SK-N-SH (cell line): ENCODE measurements at regions of chr3 and their contacts with region 1.

Region 1: GRCh38 chr3:122679085-122679881 is 1.4 kb upstream of the PARP14 start:
- DNase-seq: peak; percentile 74
- H3K4me3 ChIP-seq: peak overlapping the region in 1 of 2 experiments; percentile 34; a peak in 1 of 4 replicates
- H3K27ac ChIP-seq: no peak overlapping the region
- H3K4me1 ChIP-seq: peaks cover 12 to 16% of the 10 kb centered on the region in 2 experiments; a peak in 3 of 4 replicates
- H3K27me3 ChIP-seq: no peaks in the 10 kb centered on the region
- CTCF ChIP-seq: peak; percentile 86
- EP300 ChIP-seq: no peak
- RAD21 ChIP-seq: peak; percentile 93

Region 2: GRCh38 chr3:121942116-121942788 is 737.0 kb before region 1 on chr3:
- CTCF ChIA-PET with region 1: no interaction called
- POLR2A ChIA-PET with region 1: no interaction called
- DNase-seq: no peak
- H3K4me3 ChIP-seq: no peak overlapping the region
- H3K27ac ChIP-seq: no peak overlapping the region
- H3K4me1 ChIP-seq: no peaks in the 10 kb centered on the region
- H3K27me3 ChIP-seq: no peaks in the 10 kb centered on the region
- CTCF ChIP-seq: no peak
- EP300 ChIP-seq: no peak
- RAD21 ChIP-seq: no peak

Region 3: GRCh38 chr3:122392868-122393844 is 286.1 kb before region 1 on chr3:
- CTCF ChIA-PET with region 1: interaction called, 45 read pairs
- POLR2A ChIA-PET with region 1: interaction called, 5 read pairs
- DNase-seq: peak; percentile 33
- H3K4me3 ChIP-seq: no peak overlapping the region
- H3K27ac ChIP-seq: no peak overlapping the region; a peak in 1 of 4 replicates
- H3K4me1 ChIP-seq: peaks cover 2 to 19% of the 10 kb centered on the region in 2 experiments; a peak in 3 of 4 replicates
- H3K27me3 ChIP-seq: no peaks in the 10 kb centered on the region
- CTCF ChIP-seq: peak; percentile 85
- EP300 ChIP-seq: no peak
- RAD21 ChIP-seq: peak; percentile 83

Region 4: DNA sequence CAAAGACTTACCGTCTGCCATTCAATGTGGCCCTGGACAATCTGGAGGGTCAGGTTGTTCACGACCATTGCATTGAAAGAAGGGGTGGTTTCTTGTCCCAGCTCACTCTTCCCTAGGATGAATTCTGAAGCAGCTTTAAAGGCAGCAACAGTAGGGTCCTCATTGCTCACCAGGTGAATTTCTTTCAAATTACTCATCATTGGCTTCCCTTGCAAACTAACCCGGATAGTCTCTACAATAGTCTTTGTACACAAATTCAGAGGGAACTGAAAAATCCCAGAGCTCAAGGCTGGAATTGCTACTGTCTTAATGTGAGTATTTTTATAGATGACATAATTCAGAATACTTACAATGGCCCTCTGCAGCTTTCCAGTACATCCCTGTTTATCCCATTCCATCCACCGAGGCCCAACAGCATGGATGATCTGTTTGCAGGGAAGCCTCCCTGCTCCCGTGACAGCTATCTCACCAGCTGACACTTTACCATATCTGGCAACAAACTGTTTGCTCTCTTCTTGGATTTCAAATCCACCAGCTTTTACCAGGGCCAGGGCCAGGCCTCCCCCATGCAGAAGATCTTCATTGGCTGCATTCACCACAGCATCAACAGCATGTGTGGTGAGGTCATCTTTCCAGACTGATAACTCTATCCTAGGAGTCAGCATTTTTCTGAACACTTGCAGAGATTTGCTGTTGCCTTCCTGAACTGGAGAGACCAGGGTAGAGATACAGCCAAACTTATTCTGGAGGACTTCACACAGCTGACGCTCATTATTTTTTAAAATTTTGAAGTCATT is 123.8 kb before region 1 on chr3:
- CTCF ChIA-PET with region 1: interaction called, 84 read pairs
- POLR2A ChIA-PET with region 1: no interaction called
- DNase-seq: no peak
- H3K4me3 ChIP-seq: no peak overlapping the region
- H3K27ac ChIP-seq: no peak overlapping the region
- H3K4me1 ChIP-seq: no peaks in the 10 kb centered on the region
- H3K27me3 ChIP-seq: no peaks in the 10 kb centered on the region
- CTCF ChIP-seq: no peak
- EP300 ChIP-seq: no peak
- RAD21 ChIP-seq: no peak

Region 5: DNA sequence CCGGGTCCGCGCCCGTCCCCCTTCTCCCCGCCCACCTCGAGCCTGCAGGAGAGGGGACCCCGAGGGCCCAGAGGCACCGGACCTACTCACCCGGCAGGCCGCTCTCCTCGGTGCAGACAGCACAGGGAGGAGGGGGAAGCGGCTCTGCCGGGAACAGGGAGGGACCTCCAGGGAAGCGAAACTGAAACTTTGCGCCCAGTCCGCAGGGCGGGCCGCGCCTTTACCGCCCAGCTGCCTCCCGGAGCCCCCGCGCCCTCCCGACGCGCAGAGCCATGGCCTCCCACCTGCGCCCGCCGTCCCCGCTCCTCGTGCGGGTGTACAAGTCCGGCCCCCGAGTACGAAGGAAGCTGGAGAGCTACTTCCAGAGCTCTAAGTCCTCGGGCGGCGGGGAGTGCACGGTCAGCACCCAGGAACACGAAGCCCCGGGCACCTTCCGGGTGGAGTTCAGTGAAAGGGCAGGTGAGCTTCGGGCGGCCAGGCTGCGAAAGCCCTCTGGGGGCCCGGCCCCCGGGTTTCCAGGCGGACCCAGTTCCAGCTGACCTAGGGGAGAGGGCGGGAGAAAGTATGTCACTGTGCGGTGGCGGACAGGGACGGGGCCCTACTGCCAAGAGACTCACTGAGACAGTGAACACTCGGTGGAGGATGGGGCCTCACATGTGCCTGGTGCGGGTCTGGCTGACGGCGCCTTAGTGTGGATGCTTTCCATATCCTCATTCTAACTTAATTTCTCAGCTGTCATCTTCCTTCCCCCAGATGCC is 114.9 kb before region 1 on chr3 and contains the starts of genes DTX3L and PARP9:
- CTCF ChIA-PET with region 1: interaction called, 84 read pairs
- POLR2A ChIA-PET with region 1: interaction called, 6 read pairs
- DNase-seq: peak; percentile 90
- H3K4me3 ChIP-seq: peak within 1 kb of the TSS; percentile 75 to 78
- H3K27ac ChIP-seq: peak within 1 kb of the TSS; percentile 74 to 89
- H3K4me1 ChIP-seq: peaks cover 5 to 9% of the 10 kb centered on the region in 2 experiments; a peak in 2 of 4 replicates
- H3K27me3 ChIP-seq: no peaks in the 10 kb centered on the region
- CTCF ChIP-seq: no peak
- EP300 ChIP-seq: peak; percentile 8 to 9; a peak in 1 of 4 replicates
- RAD21 ChIP-seq: no peak
- polyA plus RNA-seq, gene DTX3L: 2.6 and 2.7 TPM in 2 replicates
- polyA plus RNA-seq, gene PARP9: 13.5 and 17.4 TPM in 2 replicates

Region 6: GRCh38 chr3:122668930-122669730 is 10.2 kb before region 1 on chr3:
- CTCF ChIA-PET with region 1: interaction called, 20 read pairs
- POLR2A ChIA-PET with region 1: no interaction called
- DNase-seq: no peak
- H3K4me3 ChIP-seq: no peak overlapping the region
- H3K27ac ChIP-seq: no peak overlapping the region
- H3K4me1 ChIP-seq: peaks cover 0 to 9% of the 10 kb centered on the region in 2 experiments; a peak in 2 of 4 replicates
- H3K27me3 ChIP-seq: no peaks in the 10 kb centered on the region
- CTCF ChIP-seq: no peak
- EP300 ChIP-seq: no peak
- RAD21 ChIP-seq: no peak

Region 7: GRCh38 chr3:122691195-122691594 is 11.9 kb after region 1 on chr3:
- CTCF ChIA-PET with region 1: interaction called, 10 read pairs
- POLR2A ChIA-PET with region 1: no interaction called
- DNase-seq: no peak
- H3K4me3 ChIP-seq: no peak overlapping the region
- H3K27ac ChIP-seq: no peak overlapping the region
- H3K4me1 ChIP-seq: no peaks in the 10 kb centered on the region
- H3K27me3 ChIP-seq: no peaks in the 10 kb centered on the region
- CTCF ChIP-seq: no peak
- EP300 ChIP-seq: no peak
- RAD21 ChIP-seq: no peak